T-cell (primary cell): ENCODE measurements at regions of chr12 and their contacts with region 1.

Region 1: GRCh38 chr12:11812586-11813427 is 163.3 kb downstream of the ETV6 start:
- DNase-seq: peak in 10 of 35 experiments; percentile 5 to 31 (median 14)
- ATAC-seq: peak; percentile 59 to 77 (median 74)
- H3K4me3 ChIP-seq: peak overlapping the region; percentile 20 to 28
- H3K4me3 Mint-ChIP-seq: peak overlapping the region; percentile 44 to 61 (median 55)
- H3K27ac ChIP-seq: no peak overlapping the region
- H3K27ac Mint-ChIP-seq: peak overlapping the region; percentile 82 to 91
- H3K4me1 ChIP-seq: peaks cover 3 to 17% of the 10 kb centered on the region in 2 experiments
- H3K4me1 Mint-ChIP-seq: peaks cover 39 to 62% (median 42%) of the 10 kb centered on the region in 3 donors
- H3K27me3 ChIP-seq: no peaks in the 10 kb centered on the region
- H3K27me3 Mint-ChIP-seq: no peaks in the 10 kb centered on the region

Region 2: GRCh38 chr12:11787933-11788849 is 24.6 kb before region 1 on chr12:
- CTCF ChIA-PET with region 1: no interaction called
- POLR2A ChIA-PET with region 1: interaction called in 1 of 2 experiments, 20 read pairs
- DNase-seq: no peak
- ATAC-seq: no peak
- H3K4me3 ChIP-seq: no peak overlapping the region
- H3K4me3 Mint-ChIP-seq: no peak overlapping the region
- H3K27ac ChIP-seq: no peak overlapping the region
- H3K27ac Mint-ChIP-seq: no peak overlapping the region
- H3K4me1 ChIP-seq: peaks cover 0 to 2% of the 10 kb centered on the region in 2 experiments
- H3K4me1 Mint-ChIP-seq: peaks cover 31 to 36% (median 33%) of the 10 kb centered on the region in 3 donors
- H3K27me3 ChIP-seq: no peaks in the 10 kb centered on the region
- H3K27me3 Mint-ChIP-seq: no peaks in the 10 kb centered on the region